ENCODE measurements at regions of chr3 and their contacts with region 1.

Region 1: DNA sequence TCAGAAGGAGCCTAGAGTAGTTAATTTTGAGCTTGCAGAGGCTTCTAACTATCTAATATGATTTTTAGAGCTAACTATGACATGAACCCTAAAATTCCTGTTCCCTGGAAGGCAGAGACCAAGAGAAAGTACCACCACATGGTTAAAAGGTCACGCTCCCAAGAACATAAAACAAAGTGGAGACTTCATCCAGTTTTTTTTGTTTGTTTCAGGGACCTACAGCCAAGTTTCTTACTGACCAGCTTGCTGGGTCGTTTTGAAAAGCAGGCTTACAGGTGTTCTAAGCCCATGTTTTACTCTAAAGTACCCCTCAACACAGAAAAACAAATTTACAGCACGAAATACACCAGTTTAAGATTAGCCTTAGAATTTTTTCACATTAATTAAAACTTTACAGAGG is 39.6 kb upstream of the SKIL start:
- DNase-seq: no peak

Region 2: GRCh38 chr3:170383567-170383966 is 65.6 kb after region 1 on chr3:
- intact Hi-C with region 1: no loop called
- DNase-seq: no peak

Region 3: DNA sequence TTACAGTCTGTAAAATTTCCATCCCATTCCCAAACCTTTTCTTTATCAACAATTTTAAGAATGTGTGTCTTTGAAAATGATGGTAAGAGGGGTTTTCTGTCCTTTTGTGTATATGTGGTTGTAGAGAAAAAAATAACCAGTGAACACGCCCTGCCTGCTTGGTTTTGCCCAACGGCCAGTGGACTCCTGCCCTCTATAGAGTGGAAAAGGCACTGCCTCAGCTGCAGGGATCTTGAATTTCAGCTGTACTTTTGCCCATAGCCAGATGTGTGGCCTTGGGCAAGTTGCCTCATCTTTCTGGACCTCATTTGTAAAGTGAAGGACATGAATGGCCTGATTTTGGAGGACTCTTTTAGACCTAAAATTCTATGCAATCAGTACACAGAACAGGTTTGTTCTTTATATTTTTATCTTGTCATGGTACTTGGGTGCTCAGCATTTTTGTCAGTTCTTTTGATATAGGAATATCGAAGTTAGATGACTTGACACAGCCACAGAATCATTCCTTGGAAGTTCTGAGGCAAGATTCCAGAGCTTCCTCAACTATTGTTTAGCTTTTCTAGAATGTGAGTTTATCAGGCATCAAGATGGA is 181.7 kb after region 1 on chr3:
- intact Hi-C with region 1: loop called (anchors 10 kb)
- DNase-seq: no peak

Region 4: DNA sequence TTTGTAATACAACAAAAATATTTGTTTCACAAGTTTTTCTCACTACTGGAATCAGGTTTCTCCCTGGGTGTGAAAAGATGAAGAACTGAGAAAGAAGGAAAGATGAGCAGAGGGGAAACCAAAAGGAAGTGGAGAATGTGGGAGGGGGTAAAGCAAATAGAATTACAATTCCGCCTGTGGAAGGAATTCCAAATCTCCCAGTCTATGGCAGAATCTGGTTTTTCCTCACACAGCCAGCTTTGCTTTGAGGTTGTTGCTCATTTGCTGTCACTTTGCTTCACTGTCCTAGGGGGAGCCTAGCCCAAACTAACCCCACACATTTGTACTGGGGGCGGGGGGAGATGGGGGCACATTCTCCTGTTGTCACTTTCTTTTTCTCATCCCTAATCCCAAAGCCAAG is 508.1 kb after region 1 on chr3:
- intact Hi-C with region 1: no loop called
- DNase-seq: no peak

Measured in cardiac septum (tissue), 1 donor.